Mammary epithelial cell (primary cell): ENCODE measurements at regions of chr11 and their contacts with region 1.

Region 1: DNA sequence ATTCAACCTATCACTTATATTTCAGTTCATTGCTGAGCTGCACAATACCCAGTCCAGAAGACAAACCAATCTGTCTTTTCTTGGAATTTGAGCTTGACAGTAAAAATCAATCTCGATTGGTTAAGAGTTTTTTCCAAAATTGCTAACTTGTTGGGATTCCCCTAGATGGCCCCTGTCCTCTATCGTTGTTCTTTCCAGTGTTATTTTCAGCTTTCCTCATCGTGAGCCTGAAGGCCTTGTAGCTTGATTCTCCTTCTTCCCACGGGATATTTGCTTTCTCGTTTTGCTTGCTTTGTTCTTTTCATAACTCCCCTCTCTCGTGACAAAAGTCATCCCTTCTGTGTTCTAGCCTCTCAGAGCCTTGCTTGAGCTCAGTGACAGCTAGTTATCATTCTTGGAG is 3.1 kb downstream of the OR8B8 start:
- DNase-seq: no peak
- H3K4me3 ChIP-seq: no peak overlapping the region
- H3K27ac ChIP-seq: no peak overlapping the region
- H3K4me1 ChIP-seq: no peaks in the 10 kb centered on the region
- H3K27me3 ChIP-seq: no peaks in the 10 kb centered on the region
- CTCF ChIP-seq: no peak

Region 2: DNA sequence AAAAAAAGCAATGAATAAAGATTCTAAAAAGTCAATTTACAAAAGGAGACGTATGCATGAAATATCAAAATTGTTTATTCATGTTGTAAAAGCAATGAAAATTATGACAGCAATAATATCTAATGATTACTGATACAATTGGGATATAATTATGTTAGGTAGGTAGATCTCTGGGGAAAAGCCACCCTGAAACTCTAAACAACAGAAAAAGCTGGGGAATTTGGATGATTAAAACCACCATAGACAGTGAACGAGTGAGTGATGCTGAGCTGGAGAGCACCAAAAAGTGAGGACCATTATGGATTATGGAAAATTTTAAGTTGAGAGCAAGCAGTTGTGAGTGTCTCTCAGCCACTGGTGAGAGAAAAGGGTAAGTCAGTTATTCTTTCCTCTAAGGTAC is 415.9 kb before region 1 on chr11 and contains the start of gene OR10G8:
- CTCF ChIA-PET with region 1: no interaction called
- dilution Hi-C with region 1: no loop called
- in situ Hi-C with region 1: no loop called
- intact Hi-C with region 1: no loop called
- DNase-seq: no peak
- H3K4me3 ChIP-seq: no peak within 1 kb of the TSS
- H3K27ac ChIP-seq: no peak within 1 kb of the TSS
- H3K4me1 ChIP-seq: no peaks in the 10 kb centered on the region
- H3K27me3 ChIP-seq: no peaks in the 10 kb centered on the region
- CTCF ChIP-seq: no peak
- total RNA-seq, gene OR10G8: not detected

Region 3: DNA sequence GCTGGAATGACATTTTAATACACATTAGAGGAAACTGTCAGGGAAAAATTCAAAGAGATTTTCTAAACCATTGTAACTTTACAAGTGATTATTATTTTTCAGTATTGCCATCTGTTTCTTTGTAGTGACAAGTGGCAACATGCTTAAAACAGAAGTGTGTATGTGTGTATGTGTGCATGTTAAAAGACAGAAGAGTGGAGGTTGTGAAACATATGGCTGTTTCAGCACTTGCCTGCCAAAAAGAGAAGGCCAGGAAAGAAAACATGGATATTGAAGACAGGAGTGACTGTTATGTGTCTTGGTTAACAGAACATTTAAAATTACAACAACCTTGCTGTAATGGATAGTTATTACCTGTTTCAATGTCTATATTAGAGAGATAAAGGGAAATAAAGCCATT is 351.4 kb before region 1 on chr11:
- CTCF ChIA-PET with region 1: no interaction called
- dilution Hi-C with region 1: no loop called
- in situ Hi-C with region 1: no loop called
- intact Hi-C with region 1: no loop called
- DNase-seq: no peak
- H3K4me3 ChIP-seq: no peak overlapping the region
- H3K27ac ChIP-seq: no peak overlapping the region
- H3K4me1 ChIP-seq: peaks cover 4% of the 10 kb centered on the region
- H3K27me3 ChIP-seq: no peaks in the 10 kb centered on the region
- CTCF ChIP-seq: no peak

Region 4: GRCh38 chr11:124519850-124520549 is 77.6 kb after region 1 on chr11:
- CTCF ChIA-PET with region 1: no interaction called
- dilution Hi-C with region 1: loop called (anchors 5 kb)
- in situ Hi-C with region 1: no loop called
- intact Hi-C with region 1: no loop called
- DNase-seq: no peak
- H3K4me3 ChIP-seq: no peak overlapping the region
- H3K27ac ChIP-seq: no peak overlapping the region
- H3K4me1 ChIP-seq: no peaks in the 10 kb centered on the region
- H3K27me3 ChIP-seq: no peaks in the 10 kb centered on the region
- CTCF ChIP-seq: no peak

Region 5: DNA sequence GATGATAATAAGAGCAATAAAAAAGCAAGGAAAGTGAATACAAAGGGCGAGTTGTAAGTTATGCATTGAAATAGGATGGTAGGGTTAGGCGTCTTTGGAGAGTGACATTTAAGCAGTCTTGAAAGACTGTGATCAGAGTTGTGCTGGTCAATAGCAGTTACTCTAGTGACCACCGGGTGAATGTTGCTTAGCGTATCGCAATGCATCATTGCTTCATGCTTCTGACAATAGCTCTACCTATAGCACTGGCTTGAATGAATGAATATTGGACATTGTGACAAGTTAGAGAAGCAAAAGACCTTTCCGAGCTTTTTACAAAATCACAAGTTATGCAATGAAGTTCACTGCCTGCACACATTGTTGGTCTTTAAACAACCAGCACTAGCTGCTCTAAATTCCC is 108.7 kb after region 1 on chr11:
- CTCF ChIA-PET with region 1: no interaction called
- dilution Hi-C with region 1: no loop called
- in situ Hi-C with region 1: no loop called
- intact Hi-C with region 1: no loop called
- DNase-seq: no peak
- H3K4me3 ChIP-seq: no peak overlapping the region
- H3K27ac ChIP-seq: no peak overlapping the region
- H3K4me1 ChIP-seq: no peaks in the 10 kb centered on the region
- H3K27me3 ChIP-seq: peaks cover under 1% of the 10 kb centered on the region
- CTCF ChIP-seq: no peak